ENCODE measurements at regions of chr7 and their contacts with region 1.

Region 1: GRCh38 chr7:140175221-140176121 is 1.3 kb downstream of the KDM7A start:
- DNase-seq: peak; percentile 85 to 96 (median 93)
- H3K4me3 ChIP-seq: peak overlapping the region; percentile 55
- H3K4me3 Mint-ChIP-seq: peak overlapping the region; percentile 87 to 94 (median 89)
- H3K27ac ChIP-seq: peak overlapping the region; percentile 86
- H3K27ac Mint-ChIP-seq: peak overlapping the region; percentile 83 to 96 (median 93)
- H3K4me1 ChIP-seq: peaks cover 39% of the 10 kb centered on the region
- H3K4me1 Mint-ChIP-seq: peaks cover 42 to 57% (median 46%) of the 10 kb centered on the region in 3 donors
- H3K27me3 ChIP-seq: no peaks in the 10 kb centered on the region
- H3K27me3 Mint-ChIP-seq: peaks cover 0 to 6% of the 10 kb centered on the region in 2 donors

Region 2: GRCh38 chr7:140153666-140154181 is 21.7 kb before region 1 on chr7:
- CTCF ChIA-PET with region 1: no interaction called
- POLR2A ChIA-PET with region 1: no interaction called
- DNase-seq: no peak
- H3K4me3 ChIP-seq: no peak overlapping the region
- H3K4me3 Mint-ChIP-seq: peak overlapping the region in 1 of 7 donors; percentile 12
- H3K27ac ChIP-seq: no peak overlapping the region
- H3K27ac Mint-ChIP-seq: peak overlapping the region in 2 of 8 donors; percentile 11 to 56
- H3K4me1 ChIP-seq: peaks cover 23% of the 10 kb centered on the region
- H3K4me1 Mint-ChIP-seq: peaks cover 62 to 82% (median 80%) of the 10 kb centered on the region in 3 donors
- H3K27me3 ChIP-seq: no peaks in the 10 kb centered on the region
- H3K27me3 Mint-ChIP-seq: no peaks in the 10 kb centered on the region

Region 3: DNA sequence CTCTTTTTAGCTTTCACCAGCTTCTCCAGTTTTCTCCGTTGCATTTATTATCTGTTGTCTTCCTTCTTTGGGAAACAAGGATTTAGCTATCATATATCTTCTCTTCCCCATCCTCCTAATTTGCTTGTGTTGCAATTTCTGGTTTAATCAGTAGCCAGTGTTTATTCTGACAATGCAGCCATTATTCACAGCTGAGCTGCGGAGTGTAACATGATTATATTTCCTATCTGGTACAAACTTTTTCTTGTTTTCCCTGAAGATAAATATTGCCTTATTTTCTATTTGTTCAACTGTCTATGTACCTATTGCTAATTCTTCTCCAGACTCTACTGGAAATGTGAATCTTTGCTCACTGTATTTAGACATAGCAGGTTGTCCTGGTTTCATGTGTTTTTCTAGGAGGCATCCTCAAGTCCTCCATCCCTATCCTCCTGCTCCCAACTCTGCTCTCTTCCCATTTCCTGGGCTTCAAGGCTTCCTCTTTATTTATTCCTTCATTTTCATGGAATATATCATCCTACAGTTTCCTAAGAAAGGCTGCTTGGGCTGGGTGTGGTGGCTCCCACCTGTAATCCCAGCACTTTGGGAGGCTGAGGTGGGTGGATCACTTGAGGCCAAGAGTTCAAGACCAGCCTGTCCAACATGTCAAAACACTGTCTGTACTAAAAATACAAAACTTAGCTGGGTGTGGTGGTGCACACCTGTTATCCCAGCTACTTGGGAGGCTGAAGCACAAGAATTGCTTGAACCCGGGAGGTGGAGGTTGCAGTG is 73.8 kb after region 1 on chr7:
- CTCF ChIA-PET with region 1: interaction called, 6 read pairs
- POLR2A ChIA-PET with region 1: interaction called, 25 read pairs
- DNase-seq: no peak
- H3K4me3 ChIP-seq: no peak overlapping the region
- H3K4me3 Mint-ChIP-seq: no peak overlapping the region
- H3K27ac ChIP-seq: no peak overlapping the region
- H3K27ac Mint-ChIP-seq: peak overlapping the region in 2 of 8 donors; percentile 44 to 86
- H3K4me1 ChIP-seq: peaks cover 22% of the 10 kb centered on the region
- H3K4me1 Mint-ChIP-seq: peaks cover 19 to 26% (median 22%) of the 10 kb centered on the region in 3 donors
- H3K27me3 ChIP-seq: no peaks in the 10 kb centered on the region
- H3K27me3 Mint-ChIP-seq: peaks cover 2 to 3% of the 10 kb centered on the region in 2 donors

Region 4: GRCh38 chr7:140263277-140263676 is 87.8 kb after region 1 on chr7:
- CTCF ChIA-PET with region 1: interaction called, 5 read pairs
- POLR2A ChIA-PET with region 1: interaction called, 10 read pairs
- DNase-seq: peak in 3 of 5 donors; percentile 67 to 75 (median 75)
- H3K4me3 ChIP-seq: peak overlapping the region; percentile 11
- H3K4me3 Mint-ChIP-seq: peak overlapping the region; percentile 1 to 89 (median 63)
- H3K27ac ChIP-seq: no peak overlapping the region
- H3K27ac Mint-ChIP-seq: peak overlapping the region; percentile 80 to 97 (median 93)
- H3K4me1 ChIP-seq: peaks cover 42% of the 10 kb centered on the region
- H3K4me1 Mint-ChIP-seq: peaks cover 34 to 51% (median 49%) of the 10 kb centered on the region in 3 donors
- H3K27me3 ChIP-seq: no peaks in the 10 kb centered on the region
- H3K27me3 Mint-ChIP-seq: peaks cover 0 to 3% of the 10 kb centered on the region in 2 donors

Region 5: DNA sequence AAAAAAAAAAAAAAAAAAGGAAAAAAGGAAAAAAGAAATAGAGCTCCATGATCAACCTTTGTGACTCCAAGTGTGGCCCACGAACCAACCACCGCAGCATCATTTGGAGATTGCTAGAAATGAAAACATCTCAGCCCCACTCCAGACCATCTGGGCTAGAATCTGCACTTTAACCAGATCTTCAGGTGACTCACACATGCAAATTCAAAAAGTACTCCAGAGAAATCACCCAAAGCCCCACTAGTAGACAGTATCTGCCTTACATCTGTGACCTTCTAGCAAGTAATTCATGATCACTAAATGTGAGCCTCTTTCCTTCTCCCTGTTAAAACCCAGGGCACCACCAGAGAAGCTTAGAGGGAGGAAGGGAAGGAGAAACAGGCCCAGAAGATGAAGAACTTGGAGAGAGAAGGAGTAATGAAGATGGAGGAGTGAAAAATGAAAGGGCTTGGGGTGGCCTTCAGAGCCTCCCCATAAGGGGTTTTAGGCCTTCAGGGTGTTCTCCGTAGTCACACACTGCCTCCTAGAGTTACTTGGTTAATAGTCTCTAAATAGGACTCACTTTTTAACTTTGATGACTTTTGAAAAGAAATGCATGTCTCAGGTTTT is 128.8 kb after region 1 on chr7:
- CTCF ChIA-PET with region 1: interaction called, 12 read pairs
- POLR2A ChIA-PET with region 1: interaction called, 10 read pairs
- DNase-seq: peak; percentile 5 to 69 (median 58)
- H3K4me3 ChIP-seq: no peak overlapping the region
- H3K4me3 Mint-ChIP-seq: no peak overlapping the region
- H3K27ac ChIP-seq: no peak overlapping the region
- H3K27ac Mint-ChIP-seq: peak overlapping the region; percentile 6 to 87 (median 64)
- H3K4me1 ChIP-seq: peaks cover 5% of the 10 kb centered on the region
- H3K4me1 Mint-ChIP-seq: peaks cover 4 to 8% (median 5%) of the 10 kb centered on the region in 3 donors
- H3K27me3 ChIP-seq: no peaks in the 10 kb centered on the region
- H3K27me3 Mint-ChIP-seq: no peaks in the 10 kb centered on the region